Activated CD4-positive, alpha-beta T cell treated with anti-CD3 and anti-CD28 coated beads, Interleukin-2, amount 10 ng/mL, durations not matched to agents 24 days and 14 days (primary cell): ENCODE measurements at regions of chr5 and their contacts with region 1.

Region 1: GRCh38 chr5:14415024-14415697 is 166.4 kb upstream of the OTULINL start:
- DNase-seq: peak; percentile 66
- H3K4me3 Mint-ChIP-seq: peak overlapping the region; percentile 64
- H3K27ac Mint-ChIP-seq: peak overlapping the region; percentile 93
- H3K4me1 Mint-ChIP-seq: peaks cover 46% of the 10 kb centered on the region
- H3K27me3 Mint-ChIP-seq: no peaks in the 10 kb centered on the region

Region 2: DNA sequence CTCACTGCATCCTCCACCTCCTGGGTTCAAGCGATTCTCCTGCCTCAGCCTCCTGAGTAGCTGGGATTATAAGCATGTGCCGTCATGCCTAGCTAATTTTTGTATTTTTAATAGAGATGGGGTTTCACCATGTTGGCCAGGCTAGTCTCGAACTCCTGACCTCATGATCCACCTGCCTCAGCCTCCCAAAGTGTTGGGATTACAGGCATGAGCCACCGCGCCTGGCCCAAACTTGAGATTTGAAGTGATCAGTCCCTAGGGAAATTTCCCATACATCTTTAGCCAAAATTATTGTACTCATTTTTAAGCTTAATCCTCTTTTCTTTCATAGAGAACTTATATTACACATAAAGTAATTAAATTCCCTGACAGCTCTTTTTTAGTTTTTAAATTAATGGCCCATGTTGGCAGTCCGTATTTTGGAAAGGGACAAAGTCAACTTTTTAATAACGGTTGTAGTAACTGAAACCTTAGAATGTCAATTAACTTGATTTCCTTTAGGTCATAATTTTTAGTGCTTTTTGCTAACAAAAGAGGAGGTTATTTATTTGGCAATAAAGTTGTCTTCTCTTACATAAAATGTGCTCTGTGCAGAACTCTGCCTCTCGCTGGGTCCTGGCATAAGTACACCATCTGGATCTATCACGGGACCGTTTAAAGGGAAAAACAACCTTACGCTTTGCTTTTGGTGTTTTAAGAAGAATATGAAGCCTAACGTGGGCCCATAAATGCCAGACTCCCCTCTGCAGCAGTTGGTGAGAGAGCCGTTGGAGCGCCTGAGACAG is 24.1 kb after region 1 on chr5:
- intact Hi-C with region 1: loop called (anchors 1 kb)
- DNase-seq: no peak
- H3K4me3 Mint-ChIP-seq: no peak overlapping the region
- H3K27ac Mint-ChIP-seq: no peak overlapping the region
- H3K4me1 Mint-ChIP-seq: peaks cover 27% of the 10 kb centered on the region
- H3K27me3 Mint-ChIP-seq: peaks cover 5% of the 10 kb centered on the region

Region 3: GRCh38 chr5:14476786-14477435 is 61.8 kb after region 1 on chr5:
- intact Hi-C with region 1: loop called (anchors 2 kb)
- DNase-seq: no peak
- H3K4me3 Mint-ChIP-seq: no peak overlapping the region
- H3K27ac Mint-ChIP-seq: no peak overlapping the region
- H3K4me1 Mint-ChIP-seq: peaks cover 9% of the 10 kb centered on the region
- H3K27me3 Mint-ChIP-seq: no peaks in the 10 kb centered on the region

Region 4: DNA sequence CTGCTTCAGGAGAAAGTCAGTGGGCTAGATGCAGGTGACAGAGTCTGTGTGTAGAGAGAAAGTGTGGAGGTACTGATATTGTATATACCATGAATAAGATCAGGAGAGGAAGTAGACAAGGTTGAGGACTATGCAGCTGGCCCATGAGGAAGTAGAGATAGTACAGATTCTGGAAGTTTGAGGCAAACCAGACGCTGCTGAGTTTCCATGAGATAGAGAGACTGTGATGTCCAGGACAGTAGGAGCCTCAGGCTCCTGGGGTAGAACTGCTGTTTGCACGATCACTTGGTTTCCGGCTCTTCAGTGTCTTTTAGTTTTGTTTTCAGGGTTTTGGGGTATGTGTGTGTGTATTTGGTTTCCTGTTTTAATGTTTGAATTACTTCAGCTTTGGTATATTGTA is 180.0 kb after region 1 on chr5:
- intact Hi-C with region 1: loop called (anchors 2 kb)
- DNase-seq: peak; percentile 89
- H3K4me3 Mint-ChIP-seq: peak overlapping the region; percentile 78
- H3K27ac Mint-ChIP-seq: peak overlapping the region; percentile 94
- H3K4me1 Mint-ChIP-seq: peaks cover 78% of the 10 kb centered on the region
- H3K27me3 Mint-ChIP-seq: no peaks in the 10 kb centered on the region

Region 5: GRCh38 chr5:14925326-14925725 is 510.2 kb after region 1 on chr5:
- intact Hi-C with region 1: loop called (anchors 10 kb)
- DNase-seq: no peak
- H3K4me3 Mint-ChIP-seq: peak overlapping the region; percentile 60
- H3K27ac Mint-ChIP-seq: peak overlapping the region; percentile 87
- H3K4me1 Mint-ChIP-seq: peaks cover 52% of the 10 kb centered on the region
- H3K27me3 Mint-ChIP-seq: no peaks in the 10 kb centered on the region